Ascending aorta (tissue), 2 donors: ENCODE measurements at regions of chr9 and their contacts with region 1.

Region 1: GRCh38 chr9:69121828-69122548 is 52.1 kb upstream of the TJP2 start:
- DNase-seq: peak; percentile 33 to 79
- H3K4me3 ChIP-seq: peak overlapping the region; percentile 82 to 89
- H3K27ac ChIP-seq: peak overlapping the region; percentile 84 to 88
- H3K4me1 ChIP-seq: peaks cover 0 to 5% of the 10 kb centered on the region in 2 donors
- H3K27me3 ChIP-seq: no peaks in the 10 kb centered on the region
- CTCF ChIP-seq: peak in 1 of 3 experiments; percentile 6

Region 2: DNA sequence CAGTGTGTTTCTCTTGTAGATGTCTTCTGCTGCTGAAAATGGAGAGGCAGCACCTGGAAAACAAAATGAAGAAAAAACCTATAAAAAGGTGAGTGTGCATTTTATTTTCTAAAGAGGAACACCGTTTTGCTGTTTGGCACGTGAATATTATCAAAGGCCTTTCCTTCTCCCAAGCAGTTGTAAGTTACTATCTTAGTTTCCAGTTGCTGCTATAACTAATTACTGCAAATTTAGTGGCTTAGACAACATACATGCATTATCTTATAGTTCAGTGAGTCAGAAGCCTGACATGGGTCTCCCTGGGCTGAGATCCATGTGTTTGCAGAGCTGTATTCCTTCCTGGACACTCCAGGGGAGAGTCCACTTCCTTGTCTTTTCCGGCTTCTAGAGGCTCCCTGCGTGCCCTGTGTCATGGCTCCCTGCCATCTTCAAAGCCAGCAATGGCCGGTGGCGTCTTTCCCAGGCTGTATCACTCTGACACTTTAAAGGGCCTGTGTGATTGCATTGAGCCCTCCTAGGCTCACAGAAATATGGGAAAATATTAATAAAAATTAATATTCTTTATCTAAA is 299.3 kb before region 1 on chr9:
- intact Hi-C with region 1: no loop called
- DNase-seq: no peak
- H3K4me3 ChIP-seq: no peak overlapping the region
- H3K27ac ChIP-seq: peak overlapping the region; percentile 6 to 24
- H3K4me1 ChIP-seq: peaks cover 0 to 5% of the 10 kb centered on the region in 2 donors
- H3K27me3 ChIP-seq: no peaks in the 10 kb centered on the region
- CTCF ChIP-seq: no peak

Region 3: GRCh38 chr9:69054989-69055388 is 67.0 kb before region 1 on chr9:
- intact Hi-C with region 1: loop called (anchors 2 kb)
- DNase-seq: no peak
- H3K4me3 ChIP-seq: no peak overlapping the region
- H3K27ac ChIP-seq: no peak overlapping the region
- H3K4me1 ChIP-seq: peaks cover 4% of the 10 kb centered on the region in 2 donors
- H3K27me3 ChIP-seq: no peaks in the 10 kb centered on the region
- CTCF ChIP-seq: no peak

Region 4: GRCh38 chr9:69063839-69064238 is 58.1 kb before region 1 on chr9:
- intact Hi-C with region 1: loop called (anchors 2 kb)
- DNase-seq: no peak
- H3K4me3 ChIP-seq: no peak overlapping the region
- H3K27ac ChIP-seq: peak overlapping the region; percentile 1 to 21
- H3K4me1 ChIP-seq: peaks cover 0 to 7% of the 10 kb centered on the region in 2 donors
- H3K27me3 ChIP-seq: no peaks in the 10 kb centered on the region
- CTCF ChIP-seq: no peak

Region 5: GRCh38 chr9:69078581-69078980 is 43.4 kb before region 1 on chr9:
- intact Hi-C with region 1: loop called (anchors 5 kb)
- DNase-seq: peak in 1 of 2 donors; percentile 89
- H3K4me3 ChIP-seq: no peak overlapping the region
- H3K27ac ChIP-seq: peak overlapping the region; percentile 72 to 73
- H3K4me1 ChIP-seq: peaks cover 12 to 28% of the 10 kb centered on the region in 2 donors
- H3K27me3 ChIP-seq: no peaks in the 10 kb centered on the region
- CTCF ChIP-seq: no peak

Region 6: DNA sequence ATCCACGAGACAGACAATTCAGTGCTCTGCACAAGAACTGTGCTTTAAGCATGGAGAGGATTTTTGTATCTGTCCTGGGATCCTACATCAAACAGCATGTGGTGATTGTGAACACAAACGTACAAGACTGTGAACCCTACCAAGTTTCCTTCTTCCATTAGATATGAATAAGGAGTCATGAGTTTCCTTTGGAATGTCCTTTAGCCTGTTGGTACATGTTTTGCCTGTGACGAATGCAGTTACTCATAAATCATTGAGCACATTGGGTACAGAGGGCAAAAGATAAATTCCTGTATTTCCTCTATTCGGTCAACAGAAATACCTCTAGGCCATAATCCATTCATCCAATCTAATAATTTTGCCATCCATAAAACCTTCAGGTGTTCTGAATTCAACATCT is 24.9 kb before region 1 on chr9:
- intact Hi-C with region 1: loop called (anchors 2 kb)
- DNase-seq: no peak
- H3K4me3 ChIP-seq: no peak overlapping the region
- H3K27ac ChIP-seq: peak overlapping the region; percentile 74 to 87
- H3K4me1 ChIP-seq: peaks cover 0 to 29% of the 10 kb centered on the region in 2 donors
- H3K27me3 ChIP-seq: no peaks in the 10 kb centered on the region
- CTCF ChIP-seq: no peak

Region 7: GRCh38 chr9:69174616-69175463 is 52.9 kb after region 1 on chr9:
- intact Hi-C with region 1: loop called (anchors 2 kb)
- DNase-seq: peak; percentile 35 to 88
- H3K4me3 ChIP-seq: peak overlapping the region; percentile 68 to 89
- H3K27ac ChIP-seq: peak overlapping the region; percentile 77 to 87
- H3K4me1 ChIP-seq: peaks cover 5 to 18% of the 10 kb centered on the region in 2 donors
- H3K27me3 ChIP-seq: no peaks in the 10 kb centered on the region
- CTCF ChIP-seq: no peak

Region 8: GRCh38 chr9:69186841-69187611 is 65.0 kb after region 1 on chr9:
- intact Hi-C with region 1: loop called (anchors 2 kb)
- DNase-seq: no peak
- H3K4me3 ChIP-seq: peak overlapping the region; percentile 0 to 16
- H3K27ac ChIP-seq: peak overlapping the region; percentile 65 to 77
- H3K4me1 ChIP-seq: peaks cover 3 to 36% of the 10 kb centered on the region in 2 donors
- H3K27me3 ChIP-seq: no peaks in the 10 kb centered on the region
- CTCF ChIP-seq: no peak